ENCODE measurements at regions of chr1 and their contacts with region 1.

Region 1: GRCh38 chr1:99980928-99981327 is 11.1 kb downstream of the SLC35A3 start:
- DNase-seq: no peak
- ATAC-seq: no peak
- H3K4me3 Mint-ChIP-seq: no peak overlapping the region
- H3K27ac Mint-ChIP-seq: no peak overlapping the region
- H3K4me1 Mint-ChIP-seq: peaks cover 16% of the 10 kb centered on the region
- H3K27me3 Mint-ChIP-seq: no peaks in the 10 kb centered on the region
- CTCF ChIP-seq: no peak

Region 2: DNA sequence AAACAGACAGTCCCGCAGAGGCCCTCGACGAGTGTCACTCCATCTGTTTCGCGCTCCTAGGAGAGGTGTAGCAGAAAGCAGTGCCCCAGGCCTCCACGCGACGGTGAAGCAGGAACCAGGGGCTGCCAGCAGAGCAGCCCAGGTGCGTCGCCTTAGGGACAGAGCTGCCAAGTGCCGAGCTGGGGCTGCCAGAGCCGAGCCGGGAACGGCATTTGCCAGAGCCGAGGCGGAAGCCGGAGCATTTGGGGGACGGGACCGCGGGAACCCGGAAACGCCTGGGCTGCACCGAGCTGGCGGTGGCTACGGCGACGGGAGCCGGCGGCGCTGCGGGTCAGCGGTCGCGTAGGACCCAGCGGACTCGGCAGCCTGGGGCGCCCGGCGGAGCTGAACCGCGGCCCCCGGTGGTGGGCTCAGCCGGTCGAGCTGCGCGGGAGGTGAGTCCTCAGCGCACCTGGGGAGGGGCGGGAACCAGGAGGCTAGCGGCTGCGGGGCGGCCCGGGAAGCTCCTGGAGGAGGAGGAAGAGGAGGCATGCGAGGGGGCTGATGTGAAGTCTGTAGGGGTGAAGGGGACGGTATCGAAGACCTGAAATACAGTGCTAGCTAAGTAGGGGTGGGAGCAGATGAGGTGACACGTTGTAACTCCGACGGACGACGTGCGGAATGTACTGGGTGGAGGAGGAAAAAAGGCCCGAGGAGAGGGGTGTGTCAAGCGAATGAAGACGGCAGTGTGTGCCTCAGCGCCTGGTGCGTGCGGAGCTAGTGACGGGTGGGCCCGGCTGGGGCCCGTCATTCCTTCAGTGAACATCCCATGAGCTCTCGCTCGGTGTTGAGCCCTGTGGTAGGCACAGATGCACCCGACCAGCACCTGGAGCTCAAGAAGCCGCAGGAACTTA is 11.0 kb before region 1 on chr1 and contains the start of gene SLC35A3:
- CTCF ChIA-PET with region 1: no interaction called
- POLR2A ChIA-PET with region 1: interaction called, 10 read pairs
- intact Hi-C with region 1: no loop called
- DNase-seq: peak; percentile 81
- ATAC-seq: peak; percentile 87
- H3K4me3 Mint-ChIP-seq: peak within 1 kb of the TSS; percentile 100
- H3K27ac Mint-ChIP-seq: peak within 1 kb of the TSS; percentile 98
- H3K4me1 Mint-ChIP-seq: peaks cover 17% of the 10 kb centered on the region
- H3K27me3 Mint-ChIP-seq: no peaks in the 10 kb centered on the region
- CTCF ChIP-seq: no peak
- total RNA-seq, gene SLC35A3: 17.5 to 19.3 TPM

Region 3: GRCh38 chr1:99992760-99993467 is 12.0 kb after region 1 on chr1:
- CTCF ChIA-PET with region 1: no interaction called
- POLR2A ChIA-PET with region 1: no interaction called
- intact Hi-C with region 1: no loop called
- DNase-seq: no peak
- ATAC-seq: no peak
- H3K4me3 Mint-ChIP-seq: no peak overlapping the region
- H3K27ac Mint-ChIP-seq: no peak overlapping the region
- H3K4me1 Mint-ChIP-seq: peaks cover 3% of the 10 kb centered on the region
- H3K27me3 Mint-ChIP-seq: no peaks in the 10 kb centered on the region
- CTCF ChIP-seq: no peak

Measured in activated CD8-positive, alpha-beta T cell treated with anti-CD3 and anti-CD28 coated beads for 36 hours (primary cell).